CD4-positive, alpha-beta T cell (primary cell): ENCODE measurements at regions of chr12 and their contacts with region 1.

Region 1: DNA sequence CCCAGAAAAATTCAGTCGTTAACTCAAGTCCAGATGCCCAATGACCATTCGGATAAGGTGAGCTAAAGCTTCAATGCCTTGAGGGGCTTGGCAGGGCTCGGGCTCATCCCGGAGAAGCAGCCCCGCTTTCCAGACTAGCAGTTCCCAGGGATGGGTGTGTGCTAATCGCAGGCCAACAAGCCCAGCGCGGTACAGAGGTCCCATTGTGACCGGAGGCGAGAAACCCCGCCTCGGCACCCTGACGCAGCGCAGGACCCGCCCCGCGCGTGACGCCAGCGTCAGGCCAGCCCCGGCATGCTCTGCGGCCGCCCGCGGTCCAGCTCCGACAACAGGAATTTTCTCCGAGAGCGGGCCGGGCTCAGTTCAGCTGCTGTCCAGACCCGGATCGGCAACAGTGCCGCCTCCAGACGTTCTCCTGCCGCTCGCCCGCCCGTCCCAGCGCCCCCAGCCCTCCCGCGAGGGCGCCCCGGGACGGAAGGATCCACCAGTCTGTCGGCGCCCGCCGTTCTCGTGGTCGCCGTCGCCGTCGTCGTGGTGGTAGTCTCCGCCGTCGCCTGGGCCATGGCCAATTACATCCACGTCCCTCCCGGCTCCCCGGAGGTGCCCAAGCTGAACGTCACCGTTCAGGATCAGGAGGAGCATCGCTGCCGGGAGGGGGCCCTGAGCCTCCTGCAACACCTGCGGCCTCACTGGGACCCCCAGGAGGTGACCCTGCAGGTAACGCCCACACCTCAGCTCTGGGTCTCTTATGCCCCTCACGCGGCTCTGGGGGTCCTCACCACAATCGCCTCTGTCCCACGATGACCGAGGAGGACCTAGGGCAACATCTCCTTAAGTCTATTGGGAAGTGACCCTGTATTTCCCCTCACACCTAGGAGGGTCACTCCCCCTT is at the start of gene ETNK1:
- DNase-seq: peak; percentile 64 to 91 (median 77)
- ATAC-seq: peak; percentile 91
- H3K4me3 ChIP-seq: peak within 1 kb of the TSS; percentile 96
- H3K4me3 Mint-ChIP-seq: peak within 1 kb of the TSS; percentile 92
- H3K27ac ChIP-seq: peak within 1 kb of the TSS; percentile 79 to 81
- H3K27ac Mint-ChIP-seq: peak within 1 kb of the TSS; percentile 90
- H3K4me1 ChIP-seq: peaks cover 7% of the 10 kb centered on the region
- H3K4me1 Mint-ChIP-seq: peaks cover 46% of the 10 kb centered on the region
- H3K27me3 ChIP-seq: no peaks in the 10 kb centered on the region
- H3K27me3 Mint-ChIP-seq: no peaks in the 10 kb centered on the region
- CTCF ChIP-seq: no peak
- total RNA-seq, gene ETNK1: 24.3 to 26.4 TPM

Region 2: DNA sequence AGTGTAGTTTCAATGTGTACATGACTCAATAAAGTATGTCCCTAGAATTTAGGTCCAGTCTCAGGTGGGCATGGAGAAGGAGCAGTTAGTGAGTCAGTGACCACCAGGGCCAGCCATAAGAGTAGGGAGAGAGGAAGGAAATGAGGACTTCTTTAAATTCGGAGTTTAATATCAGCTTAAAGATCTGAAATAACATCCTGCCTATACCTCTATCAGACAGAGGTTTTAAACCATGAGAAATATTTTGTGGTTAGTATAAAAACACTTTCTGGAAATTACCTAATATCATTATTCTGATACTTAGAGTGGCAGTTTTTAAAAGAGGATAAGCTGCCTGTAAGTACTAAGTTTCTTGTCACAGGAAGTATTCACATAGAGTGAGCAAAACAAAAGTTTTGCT is 228.9 kb before region 1 on chr12:
- CTCF ChIA-PET with region 1: no interaction called
- POLR2A ChIA-PET with region 1: no interaction called
- intact Hi-C with region 1: loop called in 1 of 2 experiments (anchors 10 kb)
- DNase-seq: peak in 8 of 14 experiments; percentile 7 to 78 (median 30)
- ATAC-seq: peak; percentile 84
- H3K4me3 ChIP-seq: no peak overlapping the region
- H3K4me3 Mint-ChIP-seq: peak overlapping the region; percentile 80
- H3K27ac ChIP-seq: peak overlapping the region; percentile 66 to 75
- H3K27ac Mint-ChIP-seq: peak overlapping the region; percentile 85
- H3K4me1 ChIP-seq: peaks cover 28% of the 10 kb centered on the region
- H3K4me1 Mint-ChIP-seq: peaks cover 42% of the 10 kb centered on the region
- H3K27me3 ChIP-seq: no peaks in the 10 kb centered on the region
- H3K27me3 Mint-ChIP-seq: no peaks in the 10 kb centered on the region
- CTCF ChIP-seq: no peak

Region 3: DNA sequence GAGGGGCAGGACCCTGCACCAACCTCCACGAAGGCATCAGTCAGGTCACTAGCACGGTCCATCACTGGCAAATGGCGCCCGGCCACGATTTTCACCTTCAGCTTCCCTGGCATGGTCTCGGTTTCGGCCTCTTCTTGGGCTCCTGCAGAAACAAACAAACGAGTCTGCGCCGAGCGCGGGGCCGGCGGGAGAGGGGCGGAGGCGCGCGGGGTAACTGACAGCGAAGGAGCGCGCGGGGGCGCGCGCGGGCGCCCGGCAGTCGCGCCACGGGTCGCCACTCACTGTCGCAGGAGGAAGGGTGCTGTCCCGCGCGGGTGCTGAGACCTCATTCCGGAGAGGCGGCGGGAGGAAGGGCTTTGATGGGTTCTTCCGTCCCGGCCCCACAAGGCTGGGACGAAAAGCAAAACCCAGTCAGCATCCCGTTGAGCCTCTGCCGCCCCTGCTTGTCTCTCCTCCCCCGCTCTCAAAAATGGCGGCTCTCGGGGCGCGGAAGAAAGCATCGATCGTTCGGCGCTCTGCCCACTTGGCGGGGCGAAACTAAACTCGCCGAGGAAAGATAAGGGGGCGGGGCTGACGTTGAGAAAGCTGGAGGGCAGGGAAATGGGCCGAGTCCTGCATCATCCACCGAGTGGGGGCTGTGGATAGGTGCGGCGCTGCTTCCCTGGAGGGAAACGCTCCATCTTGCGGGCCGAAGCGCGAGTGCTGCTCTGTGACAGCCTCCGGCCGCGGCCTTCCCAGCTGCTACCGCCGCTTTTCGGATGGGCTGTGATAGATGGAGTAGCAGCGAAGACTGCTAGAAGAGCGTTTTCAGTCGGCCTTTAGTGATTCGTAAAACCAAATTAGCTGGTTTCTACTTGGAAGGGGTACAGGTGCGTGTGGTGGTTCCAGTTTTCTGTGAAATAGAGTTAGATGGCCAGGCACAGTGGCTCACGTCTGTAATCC is 80.8 kb before region 1 on chr12 and contains the start of gene C2CD5:
- CTCF ChIA-PET with region 1: interaction called, 7 read pairs
- POLR2A ChIA-PET with region 1: interaction called, 60 read pairs
- intact Hi-C with region 1: loop called (anchors 1 to 5 kb)
- DNase-seq: peak; percentile 90 to 98 (median 94)
- ATAC-seq: peak; percentile 89
- H3K4me3 ChIP-seq: peak within 1 kb of the TSS; percentile 82
- H3K4me3 Mint-ChIP-seq: peak within 1 kb of the TSS; percentile 95
- H3K27ac ChIP-seq: peak within 1 kb of the TSS; percentile 81 to 88
- H3K27ac Mint-ChIP-seq: peak within 1 kb of the TSS; percentile 97
- H3K4me1 ChIP-seq: peaks cover 31% of the 10 kb centered on the region
- H3K4me1 Mint-ChIP-seq: peaks cover 44% of the 10 kb centered on the region
- H3K27me3 ChIP-seq: no peaks in the 10 kb centered on the region
- H3K27me3 Mint-ChIP-seq: peaks cover 6% of the 10 kb centered on the region
- CTCF ChIP-seq: peak; percentile 37
- total RNA-seq, gene C2CD5: 21.8 to 23.2 TPM